PC-9 (cell line): ENCODE measurements at regions of chr1 and their contacts with region 1.

Region 1: GRCh38 chr1:115807723-115808122 is 33.2 kb downstream of the NHLH2 start:
- DNase-seq: peak; percentile 42 to 71
- H3K4me3 ChIP-seq: no peak overlapping the region
- H3K27ac ChIP-seq: no peak overlapping the region
- H3K4me1 ChIP-seq: no peaks in the 10 kb centered on the region
- H3K27me3 ChIP-seq: no peaks in the 10 kb centered on the region
- CTCF ChIP-seq: peak; percentile 95

Region 2: GRCh38 chr1:115237507-115237906 is 570.2 kb before region 1 on chr1:
- CTCF ChIA-PET with region 1: interaction called, 12 read pairs
- POLR2A ChIA-PET with region 1: no interaction called
- intact Hi-C with region 1: no loop called
- DNase-seq: no peak
- H3K4me3 ChIP-seq: no peak overlapping the region
- H3K27ac ChIP-seq: no peak overlapping the region
- H3K4me1 ChIP-seq: peaks cover 20% of the 10 kb centered on the region
- H3K27me3 ChIP-seq: no peaks in the 10 kb centered on the region
- CTCF ChIP-seq: no peak

Region 3: DNA sequence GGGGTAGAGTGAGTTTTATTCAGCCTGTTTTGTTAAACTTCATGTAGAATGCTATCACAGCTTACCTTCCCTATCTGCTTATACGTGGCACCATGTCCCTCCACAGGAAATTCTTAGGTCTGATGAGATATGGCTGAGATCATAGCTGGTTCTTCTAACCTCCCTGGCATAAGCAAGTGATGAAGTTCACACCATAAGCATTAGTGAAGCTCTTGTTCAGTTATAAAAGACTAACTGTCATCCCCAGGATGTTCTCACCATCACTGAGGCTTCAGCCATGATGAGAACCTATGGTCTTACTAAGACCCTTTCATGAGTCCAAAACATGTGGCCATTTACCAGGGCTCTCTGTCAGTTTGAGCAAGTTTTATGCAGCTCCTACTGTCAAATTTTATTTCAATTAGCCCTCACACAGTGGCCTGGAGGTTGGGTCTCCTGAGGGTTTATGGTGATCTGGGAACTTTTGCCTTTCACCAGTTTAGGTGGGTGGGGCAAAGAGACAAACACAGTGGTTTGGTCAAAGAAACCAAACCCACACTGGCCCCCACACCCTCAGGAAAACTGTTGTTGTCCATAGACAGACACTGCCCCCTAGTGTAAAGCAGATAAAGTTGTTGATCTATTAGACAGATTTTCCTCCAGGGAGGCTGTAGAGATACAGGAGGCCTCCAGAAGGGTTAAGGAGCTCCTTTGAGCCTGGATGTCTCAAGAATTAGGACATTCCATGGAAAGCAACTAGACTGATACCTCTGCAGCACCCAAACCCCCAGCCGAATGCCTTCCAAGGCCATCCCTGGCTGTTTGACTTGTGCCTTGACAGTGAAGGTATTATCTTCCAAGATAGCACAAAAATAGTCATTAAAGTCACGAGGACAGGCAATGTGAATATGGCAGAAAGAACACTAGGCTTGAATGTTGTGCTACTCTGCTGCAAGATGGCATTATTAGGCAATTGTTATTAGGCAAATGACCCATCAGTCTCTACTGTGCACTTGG is 173.6 kb after region 1 on chr1:
- CTCF ChIA-PET with region 1: interaction called, 9 read pairs
- POLR2A ChIA-PET with region 1: no interaction called
- intact Hi-C with region 1: loop called (anchors 1 kb)
- DNase-seq: peak; percentile 40 to 55
- H3K4me3 ChIP-seq: no peak overlapping the region
- H3K27ac ChIP-seq: no peak overlapping the region
- H3K4me1 ChIP-seq: peaks cover 26% of the 10 kb centered on the region
- H3K27me3 ChIP-seq: no peaks in the 10 kb centered on the region
- CTCF ChIP-seq: peak; percentile 98

Region 4: GRCh38 chr1:116033322-116033721 is 225.6 kb after region 1 on chr1:
- CTCF ChIA-PET with region 1: no interaction called
- POLR2A ChIA-PET with region 1: no interaction called
- intact Hi-C with region 1: no loop called
- DNase-seq: no peak
- H3K4me3 ChIP-seq: no peak overlapping the region
- H3K27ac ChIP-seq: no peak overlapping the region
- H3K4me1 ChIP-seq: no peaks in the 10 kb centered on the region
- H3K27me3 ChIP-seq: no peaks in the 10 kb centered on the region
- CTCF ChIP-seq: no peak

Region 5: DNA sequence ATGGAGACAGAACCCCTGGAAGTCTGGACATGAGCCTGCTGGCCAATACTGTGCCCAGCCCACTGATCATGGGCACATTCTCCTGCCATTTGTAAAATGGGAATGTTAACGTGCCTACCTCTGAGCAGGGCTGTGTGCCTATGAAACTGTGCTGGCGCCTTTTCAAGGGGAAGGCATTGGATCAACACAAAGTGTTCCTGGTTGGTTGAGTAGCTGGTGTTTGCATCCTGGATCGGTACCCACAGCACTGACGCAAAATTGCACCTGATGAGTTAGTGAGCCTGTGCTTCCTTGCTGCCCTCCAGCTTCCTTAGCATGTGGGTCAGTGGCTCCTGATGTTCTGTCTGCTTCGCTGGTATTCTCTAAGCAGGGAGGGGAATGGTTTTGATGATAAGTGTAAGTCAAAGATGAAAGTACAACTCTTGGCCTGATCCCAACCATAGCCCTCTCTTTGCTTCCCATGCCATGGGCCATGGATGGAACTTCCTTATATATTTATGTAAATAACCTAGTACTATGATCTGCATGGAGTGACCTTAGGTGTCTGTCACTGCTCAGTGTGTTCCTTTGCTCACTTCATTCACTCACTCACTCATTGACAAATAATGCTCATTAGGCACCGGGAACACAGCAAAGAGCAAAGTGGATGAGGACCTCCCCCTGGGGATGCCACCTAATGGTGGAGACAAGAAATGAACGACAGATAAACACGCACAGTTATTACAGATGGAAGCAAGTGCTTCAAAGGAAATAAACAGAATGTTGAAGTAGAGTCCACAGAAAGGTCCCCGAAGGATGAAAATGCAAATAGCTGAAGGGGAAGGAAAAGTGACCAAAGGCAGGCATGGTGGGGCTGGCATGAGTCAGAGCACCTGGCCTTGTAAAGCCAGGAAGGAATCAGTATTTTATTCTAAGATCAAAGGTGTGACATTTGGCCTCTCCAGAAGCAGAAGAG is 326.2 kb after region 1 on chr1:
- CTCF ChIA-PET with region 1: no interaction called
- POLR2A ChIA-PET with region 1: no interaction called
- intact Hi-C with region 1: loop called (anchors 10 kb)
- DNase-seq: no peak
- H3K4me3 ChIP-seq: no peak overlapping the region
- H3K27ac ChIP-seq: no peak overlapping the region
- H3K4me1 ChIP-seq: peaks cover 6% of the 10 kb centered on the region
- H3K27me3 ChIP-seq: no peaks in the 10 kb centered on the region
- CTCF ChIP-seq: peak; percentile 45; the same call in 1 of the 2 replicates

Region 6: DNA sequence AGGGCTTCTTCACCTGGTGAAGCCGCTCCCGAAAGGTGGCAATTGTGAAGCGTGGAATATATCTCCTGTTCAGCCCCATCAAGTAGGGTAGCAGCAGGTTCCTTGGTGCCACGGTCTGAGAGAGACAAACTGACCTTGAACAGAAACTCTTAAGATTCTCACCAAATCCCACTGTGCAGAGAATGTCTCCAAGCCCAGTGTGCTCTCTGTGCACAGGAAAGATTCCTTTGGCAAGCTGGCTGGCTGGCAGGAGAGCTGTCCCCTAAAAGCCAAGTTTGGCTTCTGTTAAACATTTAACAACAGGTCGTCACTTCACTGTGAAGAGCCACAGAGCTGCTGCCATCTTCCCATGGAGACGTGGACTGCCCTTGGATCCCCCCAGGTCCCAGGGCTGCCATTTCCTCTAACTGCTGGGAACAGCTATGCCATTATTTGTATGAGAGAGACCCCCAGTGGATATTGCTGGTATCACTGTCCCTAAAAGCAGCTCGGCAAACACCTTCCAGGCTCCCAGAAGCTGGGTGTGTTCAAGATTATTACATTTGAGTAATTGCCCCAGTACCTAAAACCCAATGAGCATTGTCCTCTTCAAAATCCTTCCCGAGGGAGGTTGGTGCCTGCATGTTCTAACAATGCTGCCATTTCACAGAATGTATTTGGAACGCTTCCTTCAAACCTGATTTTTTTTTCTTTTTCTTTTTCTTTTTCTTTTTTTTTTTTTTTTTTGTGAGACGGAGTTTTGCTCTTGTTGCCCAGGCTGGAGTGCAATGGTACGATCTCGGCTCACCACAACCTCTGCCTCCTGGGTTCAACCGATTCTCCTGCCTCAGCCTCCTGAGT is 691.3 kb after region 1 on chr1:
- CTCF ChIA-PET with region 1: no interaction called
- POLR2A ChIA-PET with region 1: no interaction called
- intact Hi-C with region 1: loop called (anchors 5 kb)
- DNase-seq: peak; percentile 58 to 67
- H3K4me3 ChIP-seq: no peak overlapping the region
- H3K27ac ChIP-seq: no peak overlapping the region
- H3K4me1 ChIP-seq: peaks cover 57% of the 10 kb centered on the region
- H3K27me3 ChIP-seq: no peaks in the 10 kb centered on the region
- CTCF ChIP-seq: peak; percentile 99